Mammary epithelial cell (primary cell): ENCODE measurements at regions of chr6 and their contacts with region 1.

Region 1: DNA sequence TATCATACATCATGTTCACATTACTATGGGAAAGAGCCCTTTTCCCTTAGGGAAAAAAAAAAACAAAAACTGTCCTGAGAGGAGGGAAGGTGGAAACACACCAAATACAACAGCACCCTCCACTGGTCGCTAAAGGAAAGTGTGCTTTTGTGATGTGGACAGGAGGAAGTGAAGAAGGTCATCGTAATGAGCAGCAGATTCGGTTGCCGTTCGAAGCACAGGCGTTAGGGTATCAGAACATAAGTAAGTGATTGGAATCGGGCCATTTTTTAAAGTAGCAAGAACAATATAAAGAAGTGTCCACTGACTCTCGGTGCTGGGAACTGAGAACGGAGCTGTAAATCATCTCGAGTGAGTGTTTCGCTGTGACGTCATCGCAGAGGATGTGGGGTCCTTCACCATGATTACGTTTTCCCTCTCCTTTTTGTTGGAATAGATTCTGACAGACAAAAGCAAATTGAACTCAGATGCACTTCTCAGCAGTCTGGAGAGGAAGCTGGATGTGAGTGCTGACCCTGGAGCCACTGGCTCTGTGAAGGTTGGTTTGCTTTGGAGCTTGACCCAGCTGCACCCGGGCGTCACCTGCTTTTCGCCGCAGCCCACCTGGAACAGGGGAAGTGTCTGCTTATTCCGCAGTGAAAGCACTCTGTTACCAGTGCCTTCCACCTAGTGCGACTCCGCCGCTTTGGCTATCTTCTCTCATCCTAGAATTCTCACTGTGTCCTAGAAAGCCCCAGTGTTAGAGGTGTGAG is 203.6 kb upstream of the GMDS start:
- DNase-seq: peak; percentile 64
- H3K4me3 ChIP-seq: peak overlapping the region in 2 of 3 experiments; percentile 2 to 37
- H3K27ac ChIP-seq: no peak overlapping the region
- H3K4me1 ChIP-seq: peaks cover 6% of the 10 kb centered on the region
- H3K27me3 ChIP-seq: no peaks in the 10 kb centered on the region
- CTCF ChIP-seq: peak; percentile 83

Region 2: GRCh38 chr6:1596088-1596852 is 852.7 kb before region 1 on chr6:
- CTCF ChIA-PET with region 1: interaction called, 9 read pairs
- dilution Hi-C with region 1: no loop called
- in situ Hi-C with region 1: loop called in 1 of 2 experiments (anchors 25 kb)
- intact Hi-C with region 1: loop called (anchors 1 kb)
- DNase-seq: peak; percentile 43
- H3K4me3 ChIP-seq: no peak overlapping the region
- H3K27ac ChIP-seq: no peak overlapping the region
- H3K4me1 ChIP-seq: peaks cover 18% of the 10 kb centered on the region
- H3K27me3 ChIP-seq: no peaks in the 10 kb centered on the region
- CTCF ChIP-seq: peak; percentile 65 to 96

Region 3: DNA sequence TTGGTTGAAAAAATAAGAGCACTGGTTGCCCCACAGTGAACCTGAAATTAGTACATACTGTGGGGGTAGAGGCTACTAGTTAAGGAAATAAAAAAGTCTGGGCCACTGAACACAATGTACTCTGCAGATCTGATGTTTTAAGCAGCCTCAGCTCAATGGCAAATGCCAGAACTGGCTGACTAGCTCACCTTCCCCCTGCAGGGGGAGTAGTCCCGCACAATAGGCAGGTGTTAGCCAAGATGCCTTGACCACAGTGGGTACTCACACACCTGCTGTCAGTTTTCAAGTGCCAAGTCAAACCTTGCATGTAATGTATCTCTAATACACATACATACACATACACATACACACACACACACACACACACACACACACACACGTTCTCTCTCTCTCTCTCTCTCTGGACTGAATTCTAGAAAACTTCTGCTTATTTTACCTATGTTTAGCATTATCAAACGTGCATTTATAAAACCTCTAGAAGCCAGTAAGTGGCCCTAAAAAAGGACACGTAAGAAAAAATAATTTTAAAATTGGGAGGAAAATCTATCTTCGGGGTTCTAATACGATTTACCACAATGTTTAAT is 239.7 kb before region 1 on chr6:
- CTCF ChIA-PET with region 1: no interaction called
- dilution Hi-C with region 1: no loop called
- in situ Hi-C with region 1: no loop called
- intact Hi-C with region 1: loop called (anchors 1 kb)
- DNase-seq: peak; percentile 50
- H3K4me3 ChIP-seq: no peak overlapping the region
- H3K27ac ChIP-seq: no peak overlapping the region
- H3K4me1 ChIP-seq: no peaks in the 10 kb centered on the region
- H3K27me3 ChIP-seq: no peaks in the 10 kb centered on the region
- CTCF ChIP-seq: peak; percentile 83 to 95

Region 4: DNA sequence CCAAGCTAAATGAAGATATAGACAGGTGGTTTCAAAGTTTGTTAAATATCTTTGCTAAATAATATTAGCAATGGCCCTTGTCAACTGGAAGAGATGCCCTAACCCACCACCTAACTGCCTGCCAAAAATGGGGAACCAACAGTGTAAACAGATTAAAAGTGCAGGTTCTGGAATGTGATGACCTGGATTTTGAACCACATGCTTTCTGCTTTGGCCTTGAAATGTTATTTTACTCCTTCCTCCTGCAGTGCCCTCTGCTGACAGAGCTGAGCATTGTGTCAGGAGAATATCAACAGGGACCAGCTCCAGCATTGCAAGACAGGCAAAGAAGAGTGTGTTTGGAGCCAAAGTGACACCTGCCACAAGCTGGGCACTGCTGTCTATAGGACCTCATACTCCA is 75.1 kb after region 1 on chr6:
- CTCF ChIA-PET with region 1: no interaction called
- dilution Hi-C with region 1: no loop called
- in situ Hi-C with region 1: no loop called
- intact Hi-C with region 1: loop called (anchors 2 kb)
- DNase-seq: no peak
- H3K4me3 ChIP-seq: no peak overlapping the region
- H3K27ac ChIP-seq: peak overlapping the region; percentile 99
- H3K4me1 ChIP-seq: peaks cover 21% of the 10 kb centered on the region
- H3K27me3 ChIP-seq: no peaks in the 10 kb centered on the region
- CTCF ChIP-seq: peak; percentile 30 to 51

Region 5: GRCh38 chr6:2695454-2696095 is 246.6 kb after region 1 on chr6:
- CTCF ChIA-PET with region 1: no interaction called
- dilution Hi-C with region 1: no loop called
- in situ Hi-C with region 1: no loop called
- intact Hi-C with region 1: loop called (anchors 1 kb)
- DNase-seq: peak; percentile 38
- H3K4me3 ChIP-seq: no peak overlapping the region
- H3K27ac ChIP-seq: no peak overlapping the region
- H3K4me1 ChIP-seq: no peaks in the 10 kb centered on the region
- H3K27me3 ChIP-seq: no peaks in the 10 kb centered on the region
- CTCF ChIP-seq: peak; percentile 17 to 50